Activated B cell treated with CpG ODN at 0.5 μM for 24 hours (primary cell): ENCODE measurements at regions of chr14 and their contacts with region 1.

Region 1: DNA sequence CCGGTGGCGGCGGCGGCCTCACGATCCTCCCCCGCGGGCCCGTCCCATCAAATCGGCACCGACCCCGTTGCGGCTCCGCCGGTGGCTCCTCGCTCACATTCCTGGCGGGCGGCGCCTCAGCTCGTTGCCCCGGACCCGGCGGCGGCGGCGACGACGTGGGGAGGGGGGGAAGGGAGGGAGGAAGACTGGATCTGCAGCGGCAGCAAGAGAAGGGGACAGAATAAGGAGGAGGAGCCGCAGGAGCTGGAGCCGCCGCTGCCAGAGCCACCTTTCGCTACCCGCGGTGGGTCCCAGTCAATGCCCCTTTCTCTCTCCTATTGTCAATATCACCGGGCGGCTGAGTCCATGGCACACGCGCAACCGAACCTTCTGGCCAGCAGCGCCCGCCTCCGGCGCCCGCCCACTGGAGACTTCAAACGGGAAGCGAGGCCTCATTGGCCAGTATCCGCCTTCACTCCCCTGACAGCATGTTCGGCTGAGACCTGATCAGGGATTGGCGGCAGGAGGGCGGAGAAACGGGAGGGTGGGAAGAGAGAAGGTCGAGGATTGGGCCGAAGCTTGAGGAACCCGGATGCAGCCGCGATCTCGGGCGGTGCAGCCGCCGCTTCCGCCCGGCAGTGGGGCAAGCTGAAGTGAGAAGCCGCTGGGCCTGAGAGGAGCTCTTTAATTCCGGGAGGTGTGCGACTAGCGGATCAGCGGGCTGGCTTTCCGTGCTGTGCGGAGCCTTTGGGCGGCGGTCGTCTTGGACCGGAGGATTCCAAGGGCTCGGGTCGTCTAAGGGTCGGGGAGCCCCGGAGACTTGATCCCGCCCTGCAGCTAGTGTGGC is at the start of gene PPP2R5E:
- DNase-seq: peak; percentile 87
- ATAC-seq: peak; percentile 96
- H3K4me3 Mint-ChIP-seq: peak within 1 kb of the TSS; percentile 97
- H3K27ac Mint-ChIP-seq: peak within 1 kb of the TSS; percentile 92
- H3K4me1 Mint-ChIP-seq: peaks cover 34% of the 10 kb centered on the region
- H3K27me3 Mint-ChIP-seq: no peaks in the 10 kb centered on the region
- CTCF ChIP-seq: no peak
- total RNA-seq, gene PPP2R5E: 40.0 and 44.8 TPM in 2 replicates

Region 2: DNA sequence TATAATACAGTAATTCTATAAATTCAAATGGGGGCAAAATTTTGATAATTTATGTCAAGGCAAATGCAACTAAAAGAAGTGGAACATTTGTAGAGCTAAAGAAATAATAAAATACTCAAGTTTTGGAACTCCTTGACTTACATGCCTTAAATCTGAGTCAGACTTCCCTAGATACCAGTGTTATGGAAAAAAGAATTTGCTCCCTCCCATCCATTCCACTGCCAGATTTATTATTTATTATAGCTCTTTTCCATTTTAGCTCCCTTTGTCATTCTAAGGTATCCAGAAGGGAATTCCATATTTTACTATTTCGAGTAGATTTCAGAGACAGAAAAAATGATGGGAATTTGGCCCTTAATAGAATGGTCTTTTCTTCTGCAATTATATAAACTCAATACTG is 295.0 kb before region 1 on chr14:
- CTCF ChIA-PET with region 1: no interaction called
- POLR2A ChIA-PET with region 1: no interaction called
- intact Hi-C with region 1: no loop called
- DNase-seq: no peak
- ATAC-seq: no peak
- H3K4me3 Mint-ChIP-seq: no peak overlapping the region
- H3K27ac Mint-ChIP-seq: no peak overlapping the region
- H3K4me1 Mint-ChIP-seq: no peaks in the 10 kb centered on the region
- H3K27me3 Mint-ChIP-seq: peaks cover 13% of the 10 kb centered on the region
- CTCF ChIP-seq: no peak

Region 3: DNA sequence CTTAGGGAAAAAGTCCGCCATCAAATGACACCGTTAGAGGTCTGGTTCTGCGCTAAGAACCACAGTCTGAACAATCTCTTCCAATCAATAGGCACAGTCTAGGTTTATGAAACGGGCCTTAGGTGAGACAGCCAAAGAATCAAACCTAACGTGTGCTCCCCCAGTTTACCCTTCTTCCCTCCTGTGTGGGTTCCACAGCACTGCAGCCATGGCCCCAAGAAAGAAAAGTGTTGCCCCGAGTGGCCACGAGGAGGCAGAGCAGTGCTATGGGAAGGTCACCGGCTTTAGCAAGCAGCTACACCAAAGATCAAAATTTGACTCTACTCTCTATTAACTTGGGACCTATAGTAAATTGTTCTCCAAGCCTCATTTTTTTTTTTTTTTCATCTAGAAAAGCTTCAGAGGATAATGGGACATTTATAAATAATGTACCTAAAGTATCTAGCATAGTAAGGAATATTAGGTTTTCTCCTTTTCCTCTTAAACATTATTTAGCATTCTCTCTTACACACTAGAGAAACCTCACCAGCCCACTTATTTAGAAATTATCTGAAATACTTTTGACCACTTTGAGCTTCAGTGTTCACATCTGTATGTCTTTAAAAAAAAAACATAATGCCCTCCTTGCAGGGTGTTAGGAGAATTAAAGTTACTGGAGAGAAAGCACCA is 154.3 kb before region 1 on chr14:
- CTCF ChIA-PET with region 1: interaction called, 14 read pairs
- POLR2A ChIA-PET with region 1: no interaction called
- intact Hi-C with region 1: loop called (anchors 1 kb)
- DNase-seq: peak; percentile 17
- ATAC-seq: peak; percentile 81
- H3K4me3 Mint-ChIP-seq: no peak overlapping the region
- H3K27ac Mint-ChIP-seq: no peak overlapping the region
- H3K4me1 Mint-ChIP-seq: peaks cover 3% of the 10 kb centered on the region
- H3K27me3 Mint-ChIP-seq: no peaks in the 10 kb centered on the region
- CTCF ChIP-seq: no peak

Region 4: GRCh38 chr14:63478010-63478409 is 65.2 kb before region 1 on chr14:
- CTCF ChIA-PET with region 1: no interaction called
- POLR2A ChIA-PET with region 1: interaction called, 7 read pairs
- intact Hi-C with region 1: loop called (anchors 1 kb)
- DNase-seq: no peak
- ATAC-seq: peak; percentile 79
- H3K4me3 Mint-ChIP-seq: peak overlapping the region; percentile 12
- H3K27ac Mint-ChIP-seq: peak overlapping the region; percentile 54
- H3K4me1 Mint-ChIP-seq: peaks cover 46% of the 10 kb centered on the region
- H3K27me3 Mint-ChIP-seq: no peaks in the 10 kb centered on the region
- CTCF ChIP-seq: no peak

Region 5: GRCh38 chr14:63598807-63599206 is 55.6 kb after region 1 on chr14:
- CTCF ChIA-PET with region 1: no interaction called
- POLR2A ChIA-PET with region 1: no interaction called
- intact Hi-C with region 1: no loop called
- DNase-seq: no peak
- ATAC-seq: no peak
- H3K4me3 Mint-ChIP-seq: no peak overlapping the region
- H3K27ac Mint-ChIP-seq: no peak overlapping the region
- H3K4me1 Mint-ChIP-seq: peaks cover 3% of the 10 kb centered on the region
- H3K27me3 Mint-ChIP-seq: no peaks in the 10 kb centered on the region
- CTCF ChIP-seq: no peak

Region 6: GRCh38 chr14:63641473-63642228 is 98.4 kb after region 1 on chr14 and contains the start of gene WDR89:
- CTCF ChIA-PET with region 1: no interaction called
- POLR2A ChIA-PET with region 1: interaction called, 34 read pairs
- intact Hi-C with region 1: loop called (anchors 1 kb)
- DNase-seq: peak; percentile 84
- ATAC-seq: peak; percentile 83
- H3K4me3 Mint-ChIP-seq: peak within 1 kb of the TSS; percentile 92
- H3K27ac Mint-ChIP-seq: peak within 1 kb of the TSS; percentile 98
- H3K4me1 Mint-ChIP-seq: peaks cover 34% of the 10 kb centered on the region
- H3K27me3 Mint-ChIP-seq: no peaks in the 10 kb centered on the region
- CTCF ChIP-seq: no peak
- total RNA-seq, gene WDR89: 21.9 and 24.4 TPM in 2 replicates

Region 7: DNA sequence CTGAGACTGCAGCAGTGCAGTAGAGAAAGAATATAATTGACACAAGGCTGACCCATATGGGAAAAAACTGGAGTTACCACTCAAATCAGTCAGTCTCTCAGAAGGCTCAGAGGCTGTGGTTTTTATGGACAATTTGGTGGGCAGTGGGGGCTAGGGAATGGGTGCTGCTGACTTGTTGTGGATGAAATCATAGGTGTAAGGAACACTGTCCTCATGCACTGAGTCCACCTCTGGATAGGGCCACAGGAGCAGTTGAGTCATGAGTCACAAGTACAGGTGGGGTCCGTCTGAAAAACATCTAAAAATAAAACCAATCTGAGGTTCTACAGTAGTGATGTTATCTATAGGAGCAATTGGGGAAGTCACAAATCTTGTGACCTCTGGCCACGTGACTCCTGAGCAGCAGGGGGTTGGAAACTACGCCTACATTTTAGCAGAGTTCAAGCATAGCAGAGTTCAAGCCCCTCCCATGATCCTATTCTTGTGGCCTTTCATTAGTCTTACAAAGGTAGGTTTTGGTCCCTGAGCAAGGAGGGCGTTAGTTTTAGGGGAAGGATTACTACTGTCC is 202.7 kb after region 1 on chr14:
- CTCF ChIA-PET with region 1: no interaction called
- POLR2A ChIA-PET with region 1: interaction called, 4 read pairs
- intact Hi-C with region 1: loop called (anchors 1 kb)
- DNase-seq: peak; percentile 36
- ATAC-seq: peak; percentile 75
- H3K4me3 Mint-ChIP-seq: peak overlapping the region; percentile 63
- H3K27ac Mint-ChIP-seq: peak overlapping the region; percentile 96
- H3K4me1 Mint-ChIP-seq: peaks cover 47% of the 10 kb centered on the region
- H3K27me3 Mint-ChIP-seq: no peaks in the 10 kb centered on the region
- CTCF ChIP-seq: no peak

Region 8: DNA sequence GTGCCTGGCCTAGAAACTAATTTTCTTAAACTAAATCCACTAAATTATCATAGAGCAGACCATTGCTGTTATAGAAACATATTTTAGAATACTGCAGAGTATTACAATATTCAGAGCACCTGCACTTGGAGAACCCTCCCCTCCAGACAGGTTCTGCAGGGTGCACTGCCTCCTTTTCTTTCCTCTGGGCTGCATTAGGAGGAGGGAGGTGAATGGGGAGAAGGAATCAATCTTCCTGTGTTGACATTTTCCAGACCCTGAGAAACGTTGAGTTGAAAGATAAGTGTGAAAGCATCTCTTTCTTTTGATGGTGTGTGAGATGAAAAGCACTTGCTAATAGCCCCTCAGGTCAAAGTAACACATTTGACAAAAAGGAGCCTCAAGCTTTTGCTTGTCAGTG is 316.9 kb after region 1 on chr14:
- CTCF ChIA-PET with region 1: no interaction called
- POLR2A ChIA-PET with region 1: no interaction called
- intact Hi-C with region 1: no loop called
- DNase-seq: no peak
- ATAC-seq: no peak
- H3K4me3 Mint-ChIP-seq: no peak overlapping the region
- H3K27ac Mint-ChIP-seq: no peak overlapping the region
- H3K4me1 Mint-ChIP-seq: peaks cover 33% of the 10 kb centered on the region
- H3K27me3 Mint-ChIP-seq: no peaks in the 10 kb centered on the region
- CTCF ChIP-seq: no peak

Region 9: GRCh38 chr14:64232095-64232838 is 689.1 kb after region 1 on chr14:
- CTCF ChIA-PET with region 1: no interaction called
- POLR2A ChIA-PET with region 1: interaction called, 3 read pairs
- intact Hi-C with region 1: loop called (anchors 1 kb)
- DNase-seq: no peak
- ATAC-seq: peak; percentile 11
- H3K4me3 Mint-ChIP-seq: peak overlapping the region; percentile 53
- H3K27ac Mint-ChIP-seq: peak overlapping the region; percentile 97
- H3K4me1 Mint-ChIP-seq: peaks cover 61% of the 10 kb centered on the region
- H3K27me3 Mint-ChIP-seq: no peaks in the 10 kb centered on the region
- CTCF ChIP-seq: no peak